ENCODE measurements at regions of chr1 and their contacts with region 1.

Region 1: GRCh38 chr1:28248283-28249012 is 10.9 kb upstream of the SESN2 start:
- DNase-seq: peak; percentile 84
- H3K4me3 Mint-ChIP-seq: peak overlapping the region; percentile 47
- H3K27ac Mint-ChIP-seq: peak overlapping the region; percentile 84
- H3K4me1 Mint-ChIP-seq: peaks cover 42% of the 10 kb centered on the region
- H3K27me3 Mint-ChIP-seq: no peaks in the 10 kb centered on the region
- CTCF ChIP-seq: peak; percentile 81

Region 2: DNA sequence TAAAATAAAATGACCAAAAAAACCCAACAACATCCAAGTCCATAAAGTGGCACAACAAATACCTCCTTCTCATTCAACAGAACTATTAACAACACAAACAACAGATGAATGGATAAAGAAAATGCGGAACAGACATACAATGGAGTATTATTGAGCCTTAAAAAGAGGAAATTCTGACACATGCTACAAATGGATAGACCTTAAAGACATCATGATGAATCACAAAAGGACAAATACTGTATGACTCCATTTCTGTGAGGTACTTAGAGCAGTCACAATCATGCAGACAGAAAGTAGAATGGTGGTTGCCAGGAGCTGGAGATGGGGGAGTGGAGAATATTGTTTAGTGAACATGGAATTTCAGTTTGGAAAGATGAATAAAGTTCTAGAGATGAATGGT is 202.7 kb before region 1 on chr1:
- CTCF ChIA-PET with region 1: no interaction called
- POLR2A ChIA-PET with region 1: no interaction called
- intact Hi-C with region 1: no loop called
- DNase-seq: no peak
- H3K4me3 Mint-ChIP-seq: no peak overlapping the region
- H3K27ac Mint-ChIP-seq: no peak overlapping the region
- H3K4me1 Mint-ChIP-seq: no peaks in the 10 kb centered on the region
- H3K27me3 Mint-ChIP-seq: no peaks in the 10 kb centered on the region
- CTCF ChIP-seq: no peak

Region 3: GRCh38 chr1:28193701-28194161 is 54.7 kb before region 1 on chr1:
- CTCF ChIA-PET with region 1: no interaction called
- POLR2A ChIA-PET with region 1: no interaction called
- intact Hi-C with region 1: no loop called
- DNase-seq: peak; percentile 93
- H3K4me3 Mint-ChIP-seq: peak overlapping the region; percentile 54
- H3K27ac Mint-ChIP-seq: no peak overlapping the region
- H3K4me1 Mint-ChIP-seq: peaks cover 23% of the 10 kb centered on the region
- H3K27me3 Mint-ChIP-seq: no peaks in the 10 kb centered on the region
- CTCF ChIP-seq: no peak

Region 4: DNA sequence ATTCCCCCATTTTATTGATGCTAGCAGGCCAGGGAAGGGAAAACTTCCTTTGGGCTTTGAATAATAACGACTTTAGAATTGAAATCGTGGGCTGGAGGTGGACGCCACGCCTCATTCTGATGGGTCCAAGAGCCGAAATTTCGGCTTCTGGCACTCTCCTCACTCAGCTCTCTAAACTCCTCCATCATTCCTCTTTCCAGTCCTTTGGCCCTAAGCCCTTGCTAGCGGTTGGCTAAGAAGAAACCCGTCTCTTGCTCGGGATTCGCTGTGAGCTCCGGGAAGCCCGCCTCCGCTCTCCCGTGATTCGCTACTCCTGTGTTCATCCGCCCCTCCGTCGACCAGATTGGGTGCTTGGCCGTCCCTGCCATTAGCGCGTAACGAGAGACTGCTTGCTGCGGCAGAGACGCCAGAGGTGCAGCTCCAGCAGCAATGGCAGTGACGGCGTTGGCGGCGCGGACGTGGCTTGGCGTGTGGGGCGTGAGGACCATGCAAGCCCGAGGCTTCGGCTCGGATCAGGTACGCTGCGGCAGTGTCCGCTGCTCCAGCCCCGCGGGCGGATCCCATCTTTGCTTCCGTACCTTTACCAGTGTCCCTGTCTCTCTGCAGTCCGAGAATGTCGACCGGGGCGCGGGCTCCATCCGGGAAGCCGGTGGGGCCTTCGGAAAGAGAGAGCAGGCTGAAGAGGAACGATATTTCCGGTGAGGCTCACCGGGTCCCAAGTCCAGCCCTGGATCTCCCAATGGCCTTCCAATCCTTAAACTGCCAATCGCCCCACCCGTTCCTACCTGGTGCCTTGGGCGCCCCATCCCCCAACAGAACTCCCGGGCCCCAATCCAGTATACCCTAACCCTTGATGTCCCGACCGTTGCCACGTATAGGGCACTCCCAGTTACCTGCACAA is 12.4 kb before region 1 on chr1 and contains the start of gene ATP5IF1:
- CTCF ChIA-PET with region 1: interaction called, 13 read pairs
- POLR2A ChIA-PET with region 1: interaction called, 314 read pairs
- intact Hi-C with region 1: no loop called
- DNase-seq: peak; percentile 99
- H3K4me3 Mint-ChIP-seq: no peak within 1 kb of the TSS
- H3K27ac Mint-ChIP-seq: no peak within 1 kb of the TSS
- H3K4me1 Mint-ChIP-seq: no peaks in the 10 kb centered on the region
- H3K27me3 Mint-ChIP-seq: no peaks in the 10 kb centered on the region
- CTCF ChIP-seq: no peak
- total RNA-seq, gene ATP5IF1: 214 and 232 TPM in 2 replicates

Region 5: GRCh38 chr1:28273216-28273860 is 24.9 kb after region 1 on chr1:
- CTCF ChIA-PET with region 1: interaction called, 11 read pairs
- POLR2A ChIA-PET with region 1: interaction called, 6 read pairs
- intact Hi-C with region 1: no loop called
- DNase-seq: no peak
- H3K4me3 Mint-ChIP-seq: no peak overlapping the region
- H3K27ac Mint-ChIP-seq: peak overlapping the region; percentile 42
- H3K4me1 Mint-ChIP-seq: peaks cover 11% of the 10 kb centered on the region
- H3K27me3 Mint-ChIP-seq: no peaks in the 10 kb centered on the region
- CTCF ChIP-seq: no peak

Region 6: DNA sequence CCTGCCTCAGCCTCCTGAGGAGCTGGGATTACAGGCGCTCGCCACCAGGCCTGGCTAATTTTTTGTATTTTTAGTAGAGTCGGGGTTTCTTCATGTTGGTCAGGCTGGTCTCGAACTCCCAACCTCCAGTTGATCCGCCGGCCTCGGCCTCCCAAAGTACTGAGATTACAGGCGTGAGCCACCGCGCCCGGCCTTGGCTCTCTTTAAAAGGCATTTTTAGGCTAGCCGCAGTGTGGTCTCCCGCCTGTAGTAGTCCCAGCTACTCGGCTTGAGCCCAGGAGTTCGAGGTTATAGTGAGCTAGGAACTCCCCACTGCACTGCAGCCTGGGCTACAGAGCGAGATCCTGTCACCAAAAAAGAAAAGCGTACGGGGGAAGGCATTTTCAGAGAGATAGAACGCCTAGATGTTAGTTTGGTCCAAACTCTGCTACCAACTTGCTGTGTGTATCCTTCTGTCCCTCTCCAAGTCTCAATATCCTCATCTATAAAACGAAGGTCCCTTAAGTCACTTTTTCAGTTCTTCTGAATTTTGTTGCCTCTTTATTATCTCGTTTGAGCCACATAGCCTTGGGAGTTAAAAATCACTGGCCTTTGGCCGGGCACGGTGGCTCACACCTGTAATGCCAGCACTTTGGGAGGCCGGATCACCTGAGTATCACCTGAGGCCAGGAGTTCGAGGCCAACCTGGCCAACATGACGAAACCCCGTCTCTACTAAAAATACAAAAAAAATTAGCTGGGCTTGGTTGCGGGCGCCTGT is 81.1 kb after region 1 on chr1:
- CTCF ChIA-PET with region 1: interaction called, 6 read pairs
- POLR2A ChIA-PET with region 1: interaction called, 75 read pairs
- intact Hi-C with region 1: no loop called
- DNase-seq: peak; percentile 18
- H3K4me3 Mint-ChIP-seq: peak overlapping the region; percentile 93
- H3K27ac Mint-ChIP-seq: peak overlapping the region; percentile 98
- H3K4me1 Mint-ChIP-seq: peaks cover 17% of the 10 kb centered on the region
- H3K27me3 Mint-ChIP-seq: no peaks in the 10 kb centered on the region
- CTCF ChIP-seq: no peak

Region 7: GRCh38 chr1:28369371-28370238 is 121.2 kb after region 1 on chr1 and contains the start of gene PHACTR4:
- CTCF ChIA-PET with region 1: interaction called, 17 read pairs
- POLR2A ChIA-PET with region 1: interaction called, 32 read pairs
- intact Hi-C with region 1: loop called (anchors 2 kb)
- DNase-seq: peak; percentile 92
- H3K4me3 Mint-ChIP-seq: peak within 1 kb of the TSS; percentile 91
- H3K27ac Mint-ChIP-seq: peak within 1 kb of the TSS; percentile 76
- H3K4me1 Mint-ChIP-seq: peaks cover 14% of the 10 kb centered on the region
- H3K27me3 Mint-ChIP-seq: no peaks in the 10 kb centered on the region
- CTCF ChIP-seq: no peak
- total RNA-seq, gene PHACTR4: 50.7 and 56.4 TPM in 2 replicates

Region 8: DNA sequence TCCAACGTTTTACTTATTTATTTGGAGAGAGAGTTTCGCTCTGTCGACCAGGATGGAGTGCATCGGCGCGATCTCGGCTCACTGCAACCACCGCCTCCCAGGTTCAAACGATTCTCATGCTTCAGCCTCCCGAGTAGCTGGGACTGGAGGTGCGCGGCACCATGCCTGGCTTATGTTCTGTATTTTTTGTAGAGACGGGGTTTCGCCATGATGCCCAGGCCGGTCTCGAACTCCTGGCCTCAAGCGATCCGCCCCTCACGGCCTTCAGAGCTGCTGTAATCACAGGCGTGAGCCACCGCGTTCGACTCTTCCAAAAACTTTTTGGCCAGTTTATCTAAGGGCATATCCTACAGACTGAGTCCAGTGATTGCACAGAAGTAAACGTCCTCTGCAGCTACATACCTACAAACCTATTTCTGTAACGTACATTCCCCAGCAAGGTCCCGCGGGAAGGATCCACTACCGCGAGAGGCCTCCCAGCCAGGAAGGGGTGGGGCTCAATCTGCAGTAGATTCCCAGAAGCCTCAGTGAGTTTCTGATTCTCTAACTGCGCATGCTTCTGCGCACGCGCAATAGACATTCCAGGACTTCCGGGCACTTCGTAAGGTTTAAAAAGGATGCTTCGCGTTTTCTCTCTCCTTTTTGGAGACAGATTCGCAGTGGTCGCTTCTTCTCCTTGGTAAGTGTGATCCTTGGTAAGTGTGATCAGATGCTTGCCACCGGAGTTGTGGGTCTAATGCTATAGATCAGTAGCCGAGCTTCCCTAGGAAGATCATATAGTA is 257.1 kb after region 1 on chr1 and contains the start of gene RCC1:
- CTCF ChIA-PET with region 1: no interaction called
- POLR2A ChIA-PET with region 1: interaction called, 92 read pairs
- intact Hi-C with region 1: no loop called
- DNase-seq: peak; percentile 99
- H3K4me3 Mint-ChIP-seq: peak within 1 kb of the TSS; percentile 95
- H3K27ac Mint-ChIP-seq: peak within 1 kb of the TSS; percentile 98
- H3K4me1 Mint-ChIP-seq: peaks cover 22% of the 10 kb centered on the region
- H3K27me3 Mint-ChIP-seq: no peaks in the 10 kb centered on the region
- CTCF ChIP-seq: no peak
- total RNA-seq, gene RCC1: 30.3 and 42.4 TPM in 2 replicates

Region 9: DNA sequence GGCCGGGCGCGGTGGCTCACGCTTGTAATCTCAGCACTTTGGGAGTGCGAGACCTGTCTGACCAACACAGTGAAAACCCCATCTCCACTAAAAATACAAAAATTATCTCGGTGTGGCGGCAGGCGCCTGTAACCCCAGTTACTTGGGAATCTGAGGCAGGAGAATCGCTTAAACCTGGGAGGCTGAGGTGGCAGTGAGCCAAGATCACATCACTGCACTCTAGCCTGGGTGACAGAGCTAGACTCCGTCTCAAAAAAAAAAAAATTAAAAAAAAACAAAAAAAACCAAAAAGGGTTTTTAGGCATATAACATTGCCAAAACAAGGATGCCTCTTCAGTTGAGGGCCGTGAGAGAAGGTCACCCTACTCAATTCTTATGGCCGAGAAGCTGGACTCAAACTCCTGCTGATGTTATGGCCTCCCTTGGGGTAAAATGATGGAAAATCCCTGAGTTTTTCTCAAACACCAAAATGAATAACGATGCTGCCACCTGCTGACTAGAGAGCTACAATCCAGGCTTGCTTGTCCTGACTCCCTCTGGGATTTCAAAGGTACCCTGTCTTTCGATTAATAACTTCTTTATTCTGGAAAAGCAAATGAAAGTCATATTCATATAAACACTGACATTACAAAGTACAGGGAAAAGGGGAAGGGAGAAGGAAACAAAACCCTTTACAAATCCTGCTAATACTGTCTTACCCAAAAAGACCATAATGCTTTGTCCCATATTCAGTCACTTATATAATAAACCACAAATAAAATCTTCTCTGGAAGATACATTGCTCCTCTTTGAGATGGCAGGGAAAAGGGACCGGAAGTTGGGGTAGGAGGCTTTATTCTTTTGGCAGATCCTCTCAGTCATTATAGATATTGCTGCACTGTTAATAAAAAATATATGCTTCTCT is 354.3 kb after region 1 on chr1:
- CTCF ChIA-PET with region 1: interaction called, 16 read pairs
- POLR2A ChIA-PET with region 1: interaction called, 11 read pairs
- intact Hi-C with region 1: no loop called
- DNase-seq: peak; percentile 87
- H3K4me3 Mint-ChIP-seq: no peak overlapping the region
- H3K27ac Mint-ChIP-seq: no peak overlapping the region
- H3K4me1 Mint-ChIP-seq: peaks cover 10% of the 10 kb centered on the region
- H3K27me3 Mint-ChIP-seq: no peaks in the 10 kb centered on the region
- CTCF ChIP-seq: peak; percentile 76